ENCODE measurements at regions of chr11 and their contacts with region 1.

Region 1: GRCh38 chr11:1572197-1573076 is at the start of gene DUSP8:
- DNase-seq: peak; percentile 80
- H3K4me3 ChIP-seq: peak within 1 kb of the TSS; percentile 29 to 43 (median 42)
- H3K27ac ChIP-seq: peak within 1 kb of the TSS; percentile 29
- H3K4me1 ChIP-seq: peaks cover 5% of the 10 kb centered on the region
- H3K27me3 ChIP-seq: peaks cover 10 to 16% of the 10 kb centered on the region in 2 experiments
- CTCF ChIP-seq: no peak
- POLR2A ChIP-seq: no peak
- total RNA-seq, gene DUSP8: 5.9 and 8.7 TPM in 2 replicates

Region 2: GRCh38 chr11:1202776-1203504 is 369.5 kb before region 1 on chr11:
- CTCF ChIA-PET with region 1: interaction called, 30 read pairs
- POLR2A ChIA-PET with region 1: no interaction called
- dilution Hi-C with region 1: no loop called
- intact Hi-C with region 1: loop called (anchors 2 kb)
- DNase-seq: peak; percentile 29
- H3K4me3 ChIP-seq: no peak overlapping the region
- H3K27ac ChIP-seq: no peak overlapping the region
- H3K4me1 ChIP-seq: no peaks in the 10 kb centered on the region
- H3K27me3 ChIP-seq: no peaks in the 10 kb centered on the region
- CTCF ChIP-seq: peak; percentile 83 to 97
- POLR2A ChIP-seq: no peak

Region 3: DNA sequence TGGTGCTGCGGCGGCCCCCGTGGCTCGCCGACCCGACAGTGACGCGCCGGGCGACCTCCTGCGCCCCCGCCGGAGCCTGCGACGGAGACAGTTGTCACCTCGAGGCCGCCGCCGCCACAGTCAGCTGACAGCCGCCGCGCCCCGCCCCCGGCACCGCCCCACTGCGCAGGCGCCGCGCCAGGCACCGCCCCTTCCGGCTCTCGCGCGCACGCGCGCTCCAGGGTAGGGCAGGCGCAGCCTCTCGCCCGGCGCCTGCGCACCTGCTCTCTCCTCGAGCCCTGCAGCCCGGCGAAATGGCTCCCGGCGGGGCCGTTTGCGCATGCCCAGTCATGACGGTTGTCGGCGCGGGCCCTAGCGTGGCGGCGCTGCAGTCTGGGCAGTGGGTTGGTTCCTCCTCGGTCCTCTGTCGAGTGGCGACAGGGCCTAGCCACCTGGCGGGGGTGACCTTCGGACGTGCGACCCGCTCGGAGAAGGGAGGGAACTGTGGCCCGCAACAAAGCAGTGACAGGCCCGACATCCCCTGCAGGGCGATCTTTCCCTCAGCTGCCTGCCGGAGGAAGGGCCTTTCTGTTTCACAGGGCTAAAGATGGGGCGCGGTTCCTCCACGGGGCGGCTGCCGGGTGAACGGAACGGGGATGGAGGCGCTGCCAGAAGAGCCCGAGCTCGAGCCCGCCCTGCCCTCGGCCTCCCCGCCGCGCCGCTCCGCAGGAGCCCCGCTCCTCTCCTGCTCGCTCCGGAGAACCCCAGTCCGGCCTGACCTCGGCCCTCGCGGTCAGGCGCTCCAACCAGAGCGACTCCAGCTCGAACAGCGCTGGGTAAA is 262.7 kb before region 1 on chr11 and contains the start of gene TOLLIP:
- CTCF ChIA-PET with region 1: no interaction called
- POLR2A ChIA-PET with region 1: no interaction called
- dilution Hi-C with region 1: no loop called
- intact Hi-C with region 1: loop called (anchors 10 kb)
- DNase-seq: peak; percentile 96
- H3K4me3 ChIP-seq: peak within 1 kb of the TSS; percentile 59 to 84 (median 69)
- H3K27ac ChIP-seq: peak within 1 kb of the TSS; percentile 27
- H3K4me1 ChIP-seq: peaks cover 8% of the 10 kb centered on the region
- H3K27me3 ChIP-seq: peaks cover 0 to 2% of the 10 kb centered on the region in 2 experiments
- CTCF ChIP-seq: peak in 1 of 2 donors; percentile 7
- POLR2A ChIP-seq: peak; percentile 92
- total RNA-seq, gene TOLLIP: 49.1 and 49.6 TPM in 2 replicates

Region 4: GRCh38 chr11:1534682-1535081 is 37.8 kb before region 1 on chr11:
- CTCF ChIA-PET with region 1: interaction called, 9 read pairs
- POLR2A ChIA-PET with region 1: no interaction called
- dilution Hi-C with region 1: no loop called
- intact Hi-C with region 1: loop called (anchors 5 kb)
- DNase-seq: no peak
- H3K4me3 ChIP-seq: no peak overlapping the region
- H3K27ac ChIP-seq: no peak overlapping the region
- H3K4me1 ChIP-seq: peaks cover 7% of the 10 kb centered on the region
- H3K27me3 ChIP-seq: peaks cover 7 to 8% of the 10 kb centered on the region in 2 experiments
- CTCF ChIP-seq: no peak
- POLR2A ChIP-seq: no peak

Region 5: DNA sequence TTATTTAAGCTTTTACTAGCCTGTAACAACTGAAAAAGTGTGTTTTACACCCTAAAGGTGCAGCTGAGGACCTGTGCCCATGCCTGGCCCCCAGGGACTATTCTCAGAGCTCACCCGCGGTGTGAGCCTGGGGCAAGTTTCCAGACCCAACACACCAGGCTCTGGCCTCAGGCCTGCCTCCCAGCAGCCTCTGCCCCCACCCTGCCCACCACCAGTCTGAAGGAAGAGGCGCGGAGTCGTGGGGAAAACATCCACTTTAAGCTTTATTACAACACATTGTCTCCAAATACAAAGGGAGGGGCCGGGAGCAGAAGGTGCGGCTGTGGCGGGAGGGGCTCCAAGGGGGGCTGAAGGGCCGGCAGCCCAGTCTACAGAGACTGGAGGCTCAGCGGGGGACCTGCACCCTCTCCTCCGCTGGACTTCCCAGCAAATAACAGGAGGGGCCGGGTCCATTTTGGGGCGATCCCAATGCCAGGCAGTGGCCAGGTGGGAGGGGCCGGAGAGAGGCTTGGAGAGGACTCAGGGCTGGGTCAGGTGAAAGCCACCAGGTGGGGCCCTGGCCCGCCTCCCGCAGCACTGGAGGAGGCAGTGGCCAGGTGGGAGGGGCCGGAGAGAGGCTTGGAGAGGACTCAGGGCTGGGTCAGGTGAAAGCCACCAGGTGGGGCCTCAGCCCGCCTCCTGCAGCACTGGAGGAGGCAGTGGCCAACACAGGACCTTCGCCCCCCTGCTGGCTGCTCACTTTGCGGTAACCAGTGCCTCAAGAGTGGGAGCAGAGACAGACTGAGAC is 18.4 kb before region 1 on chr11:
- CTCF ChIA-PET with region 1: interaction called, 313 read pairs
- POLR2A ChIA-PET with region 1: no interaction called
- dilution Hi-C with region 1: no loop called
- intact Hi-C with region 1: no loop called
- DNase-seq: no peak
- H3K4me3 ChIP-seq: no peak overlapping the region
- H3K27ac ChIP-seq: no peak overlapping the region
- H3K4me1 ChIP-seq: no peaks in the 10 kb centered on the region
- H3K27me3 ChIP-seq: no peaks in the 10 kb centered on the region
- CTCF ChIP-seq: no peak
- POLR2A ChIP-seq: no peak

Region 6: DNA sequence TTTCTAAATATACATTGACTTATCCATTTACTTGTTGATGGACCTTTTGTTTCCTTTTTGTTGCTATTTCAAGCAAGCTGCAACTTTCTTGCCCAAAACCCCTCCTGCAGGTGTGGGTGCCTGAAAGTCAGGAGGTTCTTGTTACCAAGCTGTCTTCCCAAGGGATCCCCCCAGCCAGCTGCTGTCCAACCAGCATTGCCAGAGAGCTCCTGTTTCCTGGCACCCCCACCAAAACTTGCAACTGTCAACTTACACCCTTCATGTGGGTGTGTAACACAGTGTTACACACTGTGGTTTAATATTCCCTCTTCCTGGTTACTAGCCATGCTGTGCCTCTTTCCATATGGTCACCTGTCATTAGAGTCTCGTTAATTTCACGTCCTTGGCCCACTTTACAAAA is 14.3 kb after region 1 on chr11:
- CTCF ChIA-PET with region 1: interaction called, 42 read pairs
- POLR2A ChIA-PET with region 1: interaction called, 13 read pairs
- dilution Hi-C with region 1: no loop called
- intact Hi-C with region 1: no loop called
- DNase-seq: no peak
- H3K4me3 ChIP-seq: no peak overlapping the region
- H3K27ac ChIP-seq: no peak overlapping the region
- H3K4me1 ChIP-seq: peaks cover 7% of the 10 kb centered on the region
- H3K27me3 ChIP-seq: no peaks in the 10 kb centered on the region
- CTCF ChIP-seq: no peak
- POLR2A ChIP-seq: no peak

Region 7: GRCh38 chr11:1659506-1659905 is 87.1 kb after region 1 on chr11:
- CTCF ChIA-PET with region 1: no interaction called
- POLR2A ChIA-PET with region 1: no interaction called
- dilution Hi-C with region 1: no loop called
- intact Hi-C with region 1: no loop called
- DNase-seq: no peak
- H3K4me3 ChIP-seq: no peak overlapping the region
- H3K27ac ChIP-seq: no peak overlapping the region
- H3K4me1 ChIP-seq: peaks cover 1% of the 10 kb centered on the region
- H3K27me3 ChIP-seq: no peaks in the 10 kb centered on the region
- CTCF ChIP-seq: no peak
- POLR2A ChIP-seq: no peak

Region 8: DNA sequence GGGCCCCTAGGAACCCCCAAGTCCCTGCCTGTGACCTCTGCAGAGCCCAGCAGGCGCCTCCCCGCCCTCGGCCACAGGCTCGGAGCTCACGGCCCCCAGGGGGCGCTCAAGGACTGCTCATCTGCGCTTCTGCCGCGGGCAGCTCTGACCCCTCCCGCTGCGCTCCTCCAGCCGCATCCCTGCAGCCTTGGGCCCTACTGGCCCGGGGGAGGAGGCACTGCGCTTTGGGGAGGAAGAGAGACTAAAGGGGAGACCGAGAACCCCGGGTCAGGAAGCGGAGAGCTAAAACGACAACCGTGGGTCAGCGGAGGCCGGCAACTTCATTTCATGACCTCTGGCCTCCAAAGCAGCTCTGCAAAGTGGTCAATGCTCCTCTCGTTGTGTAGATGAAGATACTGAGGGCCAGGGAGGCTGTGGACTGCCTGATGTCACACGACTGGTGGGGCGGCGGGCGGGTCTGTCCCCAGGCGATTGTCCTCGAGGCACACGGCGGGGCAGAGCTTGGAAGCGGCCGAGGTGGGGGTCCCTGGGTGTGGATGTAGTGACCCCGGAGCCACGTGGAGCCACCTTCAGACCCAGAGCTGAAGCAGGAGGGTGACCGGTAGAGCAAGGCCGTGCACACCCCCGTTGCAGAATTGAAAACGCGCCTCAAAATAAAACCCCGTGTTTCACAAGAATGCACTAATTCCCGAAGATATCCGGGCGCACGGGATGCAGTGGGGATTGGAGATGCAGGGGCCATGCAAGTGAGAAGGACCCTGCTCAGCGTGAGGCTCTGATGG is 121.8 kb after region 1 on chr11:
- CTCF ChIA-PET with region 1: no interaction called
- POLR2A ChIA-PET with region 1: no interaction called
- dilution Hi-C with region 1: no loop called
- intact Hi-C with region 1: no loop called
- DNase-seq: peak; percentile 56
- H3K4me3 ChIP-seq: no peak overlapping the region
- H3K27ac ChIP-seq: no peak overlapping the region
- H3K4me1 ChIP-seq: peaks cover 16% of the 10 kb centered on the region
- H3K27me3 ChIP-seq: no peaks in the 10 kb centered on the region
- CTCF ChIP-seq: peak; percentile 94 to 98
- POLR2A ChIP-seq: no peak

Region 9: GRCh38 chr11:2330696-2331095 is 758.3 kb after region 1 on chr11:
- CTCF ChIA-PET with region 1: no interaction called
- POLR2A ChIA-PET with region 1: no interaction called
- dilution Hi-C with region 1: no loop called
- intact Hi-C with region 1: no loop called
- DNase-seq: no peak
- H3K4me3 ChIP-seq: no peak overlapping the region
- H3K27ac ChIP-seq: no peak overlapping the region
- H3K4me1 ChIP-seq: no peaks in the 10 kb centered on the region
- H3K27me3 ChIP-seq: no peaks in the 10 kb centered on the region
- CTCF ChIP-seq: no peak
- POLR2A ChIP-seq: no peak

Region 10: GRCh38 chr11:3412837-3413236 is 1840.4 kb after region 1 on chr11:
- CTCF ChIA-PET with region 1: no interaction called
- POLR2A ChIA-PET with region 1: no interaction called
- dilution Hi-C with region 1: no loop called
- intact Hi-C with region 1: no loop called
- DNase-seq: no peak
- H3K4me3 ChIP-seq: no peak overlapping the region
- H3K27ac ChIP-seq: no peak overlapping the region
- H3K4me1 ChIP-seq: no peaks in the 10 kb centered on the region
- H3K27me3 ChIP-seq: no peaks in the 10 kb centered on the region
- CTCF ChIP-seq: no peak
- POLR2A ChIP-seq: no peak